Activated B cell treated with CpG ODN at 0.5 μM for 24 hours (primary cell): ENCODE measurements at regions of chr7 and their contacts with region 1.

Region 1: DNA sequence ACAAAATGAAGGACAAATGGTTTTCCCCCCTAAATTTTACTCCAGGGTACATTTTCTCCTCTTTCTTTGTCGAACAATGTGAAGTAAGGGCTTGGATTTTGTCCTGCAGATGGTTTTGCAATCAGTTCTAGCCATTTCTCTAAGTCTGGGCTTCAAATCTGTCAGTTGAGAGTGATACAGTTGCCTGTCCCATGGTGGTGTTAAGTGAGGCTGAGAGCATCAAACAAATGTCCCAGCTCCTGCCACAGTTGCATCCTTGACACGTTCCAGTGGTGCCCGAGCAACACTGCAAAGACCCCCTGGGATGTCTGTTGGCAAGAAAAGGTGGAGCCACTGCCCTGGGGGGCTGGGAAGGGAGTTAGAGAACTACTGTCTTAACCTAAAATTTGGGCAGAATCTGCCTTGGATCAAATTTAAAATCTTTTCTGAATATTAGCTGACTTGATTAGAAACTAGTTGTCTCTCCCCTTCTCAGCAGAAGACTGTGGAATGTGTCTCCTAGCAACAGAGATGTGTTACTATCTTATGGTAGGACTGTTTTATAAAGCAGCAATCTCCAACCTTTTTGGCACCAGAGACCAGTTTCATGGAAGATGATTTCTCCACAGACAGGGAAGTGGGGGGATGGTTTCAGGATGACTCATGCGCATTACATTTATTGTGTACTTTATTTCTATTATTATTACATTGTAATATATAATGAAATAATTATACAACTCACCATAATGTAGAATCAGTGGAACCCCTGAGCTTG is 102.0 kb upstream of the STEAP1B start:
- DNase-seq: no peak
- ATAC-seq: no peak
- H3K4me3 Mint-ChIP-seq: no peak overlapping the region
- H3K27ac Mint-ChIP-seq: no peak overlapping the region
- H3K4me1 Mint-ChIP-seq: peaks cover 21% of the 10 kb centered on the region
- H3K27me3 Mint-ChIP-seq: no peaks in the 10 kb centered on the region
- CTCF ChIP-seq: no peak

Region 2: DNA sequence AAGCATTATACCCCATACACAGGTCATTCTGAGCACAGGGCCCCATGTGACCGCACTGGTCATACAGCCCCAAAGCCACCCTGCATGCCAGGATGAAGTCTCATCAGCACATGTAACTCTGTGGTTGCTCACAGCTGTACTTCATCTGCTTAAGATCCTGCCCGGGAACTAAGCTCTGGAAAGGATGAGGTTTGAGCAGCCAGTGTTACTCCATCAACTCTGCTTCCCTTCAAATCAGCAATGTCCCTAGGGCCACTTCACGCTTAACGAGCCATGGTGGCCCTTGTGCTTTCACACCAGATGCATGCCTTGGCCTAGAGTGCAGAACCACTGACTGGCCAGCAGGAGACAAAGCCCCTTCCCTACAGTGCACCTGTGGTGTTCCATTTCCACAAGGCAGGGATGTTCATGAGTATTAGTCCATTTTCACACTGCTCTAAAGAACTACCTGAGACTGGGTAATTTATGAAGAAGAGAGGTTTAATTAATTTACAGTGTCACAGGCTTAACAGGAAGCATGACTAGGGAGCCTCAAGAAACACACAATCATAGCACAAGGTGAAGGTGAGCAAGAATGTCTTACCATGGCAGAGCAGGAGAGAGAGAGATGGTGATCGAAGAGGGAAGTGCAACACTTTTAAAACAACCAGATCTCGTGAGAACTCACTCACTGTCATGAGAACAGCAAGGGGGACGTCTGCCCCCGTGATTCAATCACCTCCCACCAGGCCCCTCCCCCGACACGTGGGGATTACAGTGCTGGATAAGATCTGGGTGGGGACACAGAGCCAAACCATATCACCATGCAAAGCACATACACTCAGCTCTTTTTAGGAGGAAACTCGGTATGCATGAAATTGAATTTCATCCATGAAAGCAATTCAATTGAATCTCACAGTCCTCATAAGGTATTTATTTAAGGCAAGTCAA is 507.3 kb before region 1 on chr7:
- CTCF ChIA-PET with region 1: no interaction called
- POLR2A ChIA-PET with region 1: no interaction called
- intact Hi-C with region 1: no loop called
- DNase-seq: no peak
- ATAC-seq: no peak
- H3K4me3 Mint-ChIP-seq: no peak overlapping the region
- H3K27ac Mint-ChIP-seq: no peak overlapping the region
- H3K4me1 Mint-ChIP-seq: no peaks in the 10 kb centered on the region
- H3K27me3 Mint-ChIP-seq: peaks cover 8% of the 10 kb centered on the region
- CTCF ChIP-seq: no peak

Region 3: GRCh38 chr7:22586786-22587140 is 15.2 kb before region 1 on chr7:
- CTCF ChIA-PET with region 1: no interaction called
- POLR2A ChIA-PET with region 1: interaction called, 3 read pairs
- intact Hi-C with region 1: loop called (anchors 2 kb)
- DNase-seq: no peak
- ATAC-seq: no peak
- H3K4me3 Mint-ChIP-seq: peak overlapping the region; percentile 67
- H3K27ac Mint-ChIP-seq: peak overlapping the region; percentile 87
- H3K4me1 Mint-ChIP-seq: peaks cover 65% of the 10 kb centered on the region
- H3K27me3 Mint-ChIP-seq: no peaks in the 10 kb centered on the region
- CTCF ChIP-seq: no peak

Region 4: DNA sequence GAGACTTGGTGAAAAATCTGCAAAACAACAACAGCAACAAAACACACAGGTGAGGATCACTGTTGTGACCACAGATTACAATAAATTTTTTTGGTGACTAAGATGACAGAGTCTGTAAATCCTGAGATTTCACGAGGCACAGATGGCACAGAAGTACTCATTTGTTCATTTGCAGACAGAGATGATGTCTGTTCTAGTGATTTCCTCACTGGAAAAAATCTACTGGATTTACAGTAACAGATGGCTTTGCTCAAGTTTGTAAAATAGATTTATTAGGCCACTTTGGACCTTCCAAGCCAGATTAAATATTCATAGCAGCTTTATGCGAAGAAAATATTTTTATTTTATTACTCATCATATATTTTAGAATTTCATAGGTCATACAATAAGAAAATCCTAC is 11.5 kb after region 1 on chr7:
- CTCF ChIA-PET with region 1: no interaction called
- POLR2A ChIA-PET with region 1: no interaction called
- intact Hi-C with region 1: loop called (anchors 2 kb)
- DNase-seq: no peak
- ATAC-seq: no peak
- H3K4me3 Mint-ChIP-seq: no peak overlapping the region
- H3K27ac Mint-ChIP-seq: no peak overlapping the region
- H3K4me1 Mint-ChIP-seq: peaks cover 43% of the 10 kb centered on the region
- H3K27me3 Mint-ChIP-seq: no peaks in the 10 kb centered on the region
- CTCF ChIP-seq: no peak

Region 5: DNA sequence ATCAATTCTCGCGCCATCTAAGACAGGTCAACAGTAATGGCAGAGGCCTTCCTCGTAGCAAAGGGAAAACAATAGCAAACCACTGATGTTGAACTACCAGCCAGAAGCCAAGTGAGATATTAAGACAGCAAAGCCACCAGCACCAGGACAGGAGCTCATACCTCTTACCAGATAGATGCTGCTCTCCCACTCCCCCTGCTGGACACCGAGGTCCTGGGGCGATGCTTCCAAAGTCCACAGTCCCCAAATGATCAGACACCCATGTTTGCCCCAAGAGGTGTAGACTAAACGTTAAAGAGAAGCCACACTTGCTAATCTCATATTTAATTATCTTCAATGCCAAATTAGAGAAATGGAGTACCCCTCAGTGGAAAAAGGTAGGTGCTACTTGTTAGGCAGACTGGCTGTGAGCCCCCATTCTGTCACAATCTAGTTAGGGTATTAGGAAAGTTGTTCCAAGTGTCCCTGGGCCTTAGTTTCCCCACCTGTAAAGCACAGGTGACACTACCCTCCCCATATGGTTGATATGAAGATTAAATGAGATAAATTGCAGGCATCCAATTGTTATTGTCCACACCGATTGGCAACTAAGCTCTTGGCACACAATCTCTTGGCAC is 180.7 kb after region 1 on chr7:
- CTCF ChIA-PET with region 1: no interaction called
- POLR2A ChIA-PET with region 1: no interaction called
- intact Hi-C with region 1: no loop called
- DNase-seq: peak; percentile 65
- ATAC-seq: peak; percentile 99
- H3K4me3 Mint-ChIP-seq: no peak overlapping the region
- H3K27ac Mint-ChIP-seq: no peak overlapping the region
- H3K4me1 Mint-ChIP-seq: no peaks in the 10 kb centered on the region
- H3K27me3 Mint-ChIP-seq: no peaks in the 10 kb centered on the region
- CTCF ChIP-seq: no peak

Region 6: DNA sequence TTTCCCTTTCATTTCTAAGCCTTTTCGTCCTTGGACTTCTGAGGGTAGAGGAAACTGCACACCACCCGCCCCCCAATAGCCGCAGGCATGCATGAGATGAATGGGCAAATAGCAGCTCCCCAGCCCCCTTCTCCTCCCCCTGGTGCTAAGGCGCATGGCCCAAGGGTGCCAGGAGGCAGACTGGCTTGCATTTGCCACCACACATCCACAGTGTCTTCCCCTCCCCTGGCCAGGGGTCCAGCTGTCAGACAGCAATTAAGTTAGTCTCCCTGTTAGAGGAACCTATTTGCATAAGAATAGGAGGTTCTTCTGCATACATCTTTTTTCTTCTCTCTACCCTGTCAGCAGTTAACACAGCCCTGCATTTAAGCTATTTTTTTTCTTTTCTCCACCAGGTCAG is 200.4 kb after region 1 on chr7:
- CTCF ChIA-PET with region 1: no interaction called
- POLR2A ChIA-PET with region 1: no interaction called
- intact Hi-C with region 1: no loop called
- DNase-seq: no peak
- ATAC-seq: no peak
- H3K4me3 Mint-ChIP-seq: no peak overlapping the region
- H3K27ac Mint-ChIP-seq: no peak overlapping the region
- H3K4me1 Mint-ChIP-seq: no peaks in the 10 kb centered on the region
- H3K27me3 Mint-ChIP-seq: peaks cover 5% of the 10 kb centered on the region
- CTCF ChIP-seq: no peak